ENCODE measurements at regions of chr1 and their contacts with region 1.

Region 1: DNA sequence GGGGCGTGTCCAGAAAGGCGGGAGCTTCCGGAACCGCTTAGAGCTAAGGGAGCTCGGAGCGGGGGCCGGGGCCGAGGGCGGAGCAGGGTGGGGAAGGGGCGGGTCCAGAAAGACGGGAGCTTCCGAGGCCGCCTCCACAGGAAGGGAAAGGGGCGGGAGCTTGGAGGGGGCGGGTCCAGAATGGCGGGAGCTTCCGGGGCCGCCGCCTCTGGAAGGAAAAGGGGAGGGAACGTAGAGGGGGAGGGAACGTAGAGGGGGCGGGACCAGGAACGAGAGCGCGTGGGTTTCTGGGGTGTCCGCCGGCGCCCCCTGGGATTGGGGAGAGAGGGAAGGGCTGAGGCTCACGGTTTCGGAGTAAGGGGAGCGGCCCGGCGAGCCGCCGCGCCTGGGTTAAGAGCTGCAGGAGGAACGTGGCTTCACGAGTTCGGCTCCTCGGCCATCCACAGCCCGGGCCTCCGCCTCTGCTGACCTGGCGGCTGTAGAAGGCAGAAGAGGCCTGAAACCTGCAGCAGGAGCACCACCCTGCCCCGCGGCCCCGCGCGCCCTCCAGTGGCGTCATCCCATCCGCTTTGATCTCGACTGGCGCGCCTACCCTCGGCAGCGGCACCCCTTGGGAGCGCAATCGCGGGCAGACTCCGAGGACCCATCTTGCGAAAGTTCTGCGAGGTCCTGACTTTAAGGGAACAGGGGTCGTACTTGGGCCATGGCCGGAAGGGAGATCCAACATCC is 22.9 kb upstream of the HPDL start:
- DNase-seq: peak; percentile 87
- H3K4me3 Mint-ChIP-seq: peak overlapping the region; percentile 92
- H3K27ac Mint-ChIP-seq: peak overlapping the region; percentile 93
- H3K4me1 Mint-ChIP-seq: peaks cover 50% of the 10 kb centered on the region
- H3K27me3 Mint-ChIP-seq: no peaks in the 10 kb centered on the region

Region 2: GRCh38 chr1:44674113-44675000 is 629.4 kb before region 1 on chr1 and contains the starts of genes ARMH1 and TMEM53:
- intact Hi-C with region 1: loop called (anchors 1 kb)
- DNase-seq: peak; percentile 98
- H3K4me3 Mint-ChIP-seq: peak within 1 kb of the TSS; percentile 80
- H3K27ac Mint-ChIP-seq: peak within 1 kb of the TSS; percentile 79
- H3K4me1 Mint-ChIP-seq: peaks cover 30% of the 10 kb centered on the region
- H3K27me3 Mint-ChIP-seq: no peaks in the 10 kb centered on the region
- total RNA-seq, gene ARMH1: 95.3 and 99.8 TPM in 2 replicates
- total RNA-seq, gene TMEM53: 4.3 and 6.6 TPM in 2 replicates

Region 3: GRCh38 chr1:44807262-44808062 is 496.3 kb before region 1 on chr1 and contains the start of gene DYNLT4:
- intact Hi-C with region 1: loop called (anchors 1 kb)
- DNase-seq: peak; percentile 84
- H3K4me3 Mint-ChIP-seq: peak within 1 kb of the TSS; percentile 68
- H3K27ac Mint-ChIP-seq: peak within 1 kb of the TSS; percentile 99
- H3K4me1 Mint-ChIP-seq: peaks cover 88% of the 10 kb centered on the region
- H3K27me3 Mint-ChIP-seq: no peaks in the 10 kb centered on the region
- total RNA-seq, gene DYNLT4: 0.44 TPM in 1 of 2 replicates, not detected in the other

Region 4: DNA sequence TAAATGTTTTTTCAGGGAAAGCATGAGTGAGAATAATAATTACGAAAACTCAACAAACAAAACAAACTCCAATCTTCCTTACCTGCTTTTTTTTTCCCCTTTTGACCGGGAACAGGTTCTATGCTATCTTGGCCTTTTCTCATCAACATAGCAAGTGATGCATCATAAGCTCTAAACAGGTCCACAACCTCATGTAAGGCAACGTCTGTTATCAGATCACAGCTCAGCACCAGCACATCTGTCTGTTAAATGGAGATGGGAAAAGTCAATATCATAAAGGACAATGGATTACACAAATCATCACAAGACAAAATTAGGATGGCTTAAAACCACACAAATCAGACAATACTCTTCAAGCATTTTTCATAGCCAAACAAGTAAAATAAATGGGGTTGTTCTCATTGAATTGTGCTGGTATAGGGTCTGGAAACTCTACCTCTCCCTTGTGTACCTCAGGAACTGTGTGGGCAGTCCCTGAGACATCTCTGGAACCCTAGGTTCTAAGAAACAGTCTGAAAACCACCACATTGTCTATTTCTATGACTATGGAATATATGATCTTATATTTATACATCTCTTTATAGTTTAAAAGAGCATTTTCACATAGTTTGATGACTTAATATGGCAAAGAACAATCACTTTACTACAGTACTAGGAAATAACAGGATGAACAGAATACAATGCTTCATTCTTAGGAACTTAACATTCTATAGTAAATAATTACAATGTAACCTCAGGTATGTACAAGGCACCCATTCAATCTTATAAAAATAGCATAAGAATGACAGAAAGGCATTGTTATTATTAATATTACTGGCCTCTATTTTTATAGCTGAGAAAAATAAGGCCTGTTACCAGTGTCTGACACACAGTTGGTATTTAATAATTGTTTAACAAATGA is 362.1 kb before region 1 on chr1:
- intact Hi-C with region 1: loop called (anchors 5 kb)
- DNase-seq: no peak
- H3K4me3 Mint-ChIP-seq: no peak overlapping the region
- H3K27ac Mint-ChIP-seq: peak overlapping the region; percentile 80
- H3K4me1 Mint-ChIP-seq: peaks cover 20% of the 10 kb centered on the region
- H3K27me3 Mint-ChIP-seq: no peaks in the 10 kb centered on the region

Region 5: DNA sequence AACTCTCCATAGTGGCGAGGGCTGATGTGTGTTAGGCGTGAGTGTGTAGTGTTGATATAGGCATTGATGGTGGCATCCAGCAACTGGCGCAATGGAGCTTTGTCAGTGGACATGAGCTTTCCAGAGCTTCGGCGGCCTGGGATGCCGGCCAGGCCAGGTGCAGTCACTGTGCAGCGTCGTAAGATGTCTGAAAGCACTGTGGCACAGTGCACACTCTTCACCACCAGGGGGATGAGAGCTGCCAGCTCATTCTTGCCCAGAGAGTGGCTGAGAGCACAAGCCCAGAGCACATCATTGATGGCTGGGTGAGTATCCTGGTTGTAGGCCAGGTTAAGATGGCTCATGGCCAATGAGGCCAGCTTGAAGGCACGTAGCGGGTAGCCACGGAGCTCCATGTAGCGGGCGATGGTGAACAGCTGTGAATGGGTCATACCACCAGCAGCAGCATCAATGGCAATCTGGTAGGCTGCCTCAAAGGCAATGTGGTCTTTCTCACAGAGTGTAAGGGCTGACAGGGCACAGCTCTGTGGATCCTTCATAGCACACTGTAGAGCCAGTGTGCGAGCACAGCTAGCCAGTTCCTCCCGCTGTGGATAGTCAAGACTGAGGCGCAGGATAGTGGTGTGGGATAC is 285.0 kb before region 1 on chr1:
- intact Hi-C with region 1: loop called (anchors 1 kb)
- DNase-seq: peak; percentile 46
- H3K4me3 Mint-ChIP-seq: no peak overlapping the region
- H3K27ac Mint-ChIP-seq: no peak overlapping the region
- H3K4me1 Mint-ChIP-seq: peaks cover 17% of the 10 kb centered on the region
- H3K27me3 Mint-ChIP-seq: peaks cover 2% of the 10 kb centered on the region

Region 6: GRCh38 chr1:45326627-45327623 is 23.2 kb after region 1 on chr1 and contains the start of gene HPDL:
- intact Hi-C with region 1: loop called (anchors 1 kb)
- DNase-seq: peak; percentile 35
- H3K4me3 Mint-ChIP-seq: peak within 1 kb of the TSS; percentile 81
- H3K27ac Mint-ChIP-seq: peak within 1 kb of the TSS; percentile 63
- H3K4me1 Mint-ChIP-seq: peaks cover 15% of the 10 kb centered on the region
- H3K27me3 Mint-ChIP-seq: peaks cover 5% of the 10 kb centered on the region
- total RNA-seq, gene HPDL: 31.0 and 34.8 TPM in 2 replicates

Measured in activated T-helper 1 cell treated with anti-CD3 and anti-CD28 coated beads, Interleukin-12 subunit alpha, Interleukin-12 subunit beta, Interleukin-2, Interleukin-4 antibody, amounts not matched to agents 30 ng/mL and 10 ng/mL and 1 ng/mL, durations not matched to agents 14 hours and 24 hours and 36 hours (primary cell).